HepG2 (cell line): ENCODE measurements at regions of chr7 and their contacts with region 1.

Region 1: DNA sequence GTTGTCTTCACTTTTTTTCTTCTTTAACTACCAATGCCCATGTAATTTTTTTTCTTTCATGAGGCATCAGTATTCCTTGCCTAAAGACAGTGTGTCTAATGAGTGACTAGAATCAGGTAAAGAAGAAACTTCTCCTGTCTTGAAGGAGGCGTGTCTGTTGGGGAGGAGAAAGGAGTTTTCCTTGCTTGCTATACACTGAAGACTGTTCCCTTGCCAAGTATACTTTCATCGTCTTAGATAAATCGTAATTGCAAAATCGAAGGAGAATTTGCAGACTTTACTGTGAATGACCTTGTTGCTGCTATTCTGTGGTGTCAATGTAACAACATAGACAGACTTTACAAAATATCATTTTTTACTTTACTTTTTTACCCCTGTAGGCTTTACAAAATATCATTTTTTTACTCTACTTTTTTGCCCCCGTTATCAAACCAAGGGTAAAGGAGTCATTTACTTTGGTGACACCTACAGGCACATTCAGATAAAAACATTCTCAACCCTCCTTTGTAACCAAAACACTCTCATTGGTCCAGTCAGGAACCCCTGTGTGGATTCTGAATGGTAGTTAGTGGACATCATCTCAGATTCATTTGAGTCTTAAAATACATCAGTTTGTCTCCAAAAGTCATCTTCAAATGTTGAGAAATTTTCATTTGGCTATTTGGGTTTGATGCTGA is 232.4 kb downstream of the AHR start:
- DNase-seq: peak; percentile 21
- ATAC-seq: peak; percentile 80
- H3K4me3 ChIP-seq: no peak overlapping the region
- H3K27ac ChIP-seq: no peak overlapping the region
- H3K4me1 ChIP-seq: peaks cover 8% of the 10 kb centered on the region; the same call in 1 of the 2 replicates
- H3K27me3 ChIP-seq: no peaks in the 10 kb centered on the region; a peak in 1 of 5 replicates
- CTCF ChIP-seq: peak; percentile 68
- EP300 ChIP-seq: no peak
- POLR2A ChIP-seq: no peak
- RAD21 ChIP-seq: peak; percentile 57; the same call in 1 of the 2 replicates

Region 2: GRCh38 chr7:16891338-16891737 is 639.5 kb before region 1 on chr7:
- CTCF ChIA-PET with region 1: no interaction called
- POLR2A ChIA-PET with region 1: no interaction called
- in situ Hi-C with region 1: no loop called
- intact Hi-C with region 1: loop called (anchors 1 kb)
- DNase-seq: peak; percentile 63
- ATAC-seq: peak; percentile 94
- H3K4me3 ChIP-seq: no peak overlapping the region
- H3K27ac ChIP-seq: no peak overlapping the region
- H3K4me1 ChIP-seq: no peaks in the 10 kb centered on the region
- H3K27me3 ChIP-seq: no peaks in the 10 kb centered on the region
- CTCF ChIP-seq: peak; percentile 84
- EP300 ChIP-seq: no peak
- POLR2A ChIP-seq: no peak
- RAD21 ChIP-seq: peak; percentile 80

Region 3: GRCh38 chr7:16926283-16926682 is 604.6 kb before region 1 on chr7:
- CTCF ChIA-PET with region 1: no interaction called
- POLR2A ChIA-PET with region 1: no interaction called
- in situ Hi-C with region 1: loop called (anchors 25 kb)
- intact Hi-C with region 1: loop called (anchors 5 kb)
- DNase-seq: peak; percentile 28
- ATAC-seq: peak; percentile 86
- H3K4me3 ChIP-seq: no peak overlapping the region
- H3K27ac ChIP-seq: no peak overlapping the region
- H3K4me1 ChIP-seq: peaks cover 28% of the 10 kb centered on the region
- H3K27me3 ChIP-seq: no peaks in the 10 kb centered on the region; a peak in 1 of 5 replicates
- CTCF ChIP-seq: peak; percentile 57
- EP300 ChIP-seq: no peak
- POLR2A ChIP-seq: no peak
- RAD21 ChIP-seq: peak; percentile 35; the same call in 1 of the 2 replicates

Region 4: DNA sequence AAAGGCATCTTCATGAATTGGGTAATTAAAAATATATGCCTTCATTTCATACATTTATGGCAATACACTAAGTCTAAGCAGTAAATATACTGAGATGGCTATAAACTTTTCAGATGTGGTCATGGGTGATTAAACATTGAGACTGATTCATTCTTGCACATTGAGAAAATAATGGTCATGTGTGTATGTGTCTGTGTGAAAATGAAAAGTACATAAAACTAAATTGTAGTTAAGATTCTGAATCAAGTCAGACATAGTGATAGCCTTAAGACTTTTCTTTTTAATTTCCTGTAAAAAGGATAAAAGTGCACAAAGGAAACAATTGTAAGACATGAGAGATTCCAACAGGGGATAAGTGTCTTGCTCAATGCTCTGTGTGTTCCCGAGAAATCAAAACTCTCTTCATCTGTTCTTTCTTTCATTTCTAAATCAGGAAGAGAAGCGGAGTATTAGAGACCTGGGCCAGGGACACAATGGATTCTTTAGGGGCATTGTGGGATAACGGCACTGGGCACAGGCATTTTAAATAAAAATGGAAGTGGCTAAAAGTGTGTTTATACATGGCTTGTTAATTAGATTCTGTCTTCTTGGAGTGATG is 579.3 kb before region 1 on chr7:
- CTCF ChIA-PET with region 1: no interaction called
- POLR2A ChIA-PET with region 1: no interaction called
- in situ Hi-C with region 1: loop called (anchors 25 kb)
- intact Hi-C with region 1: loop called (anchors 10 kb)
- DNase-seq: no peak
- ATAC-seq: no peak
- H3K4me3 ChIP-seq: no peak overlapping the region
- H3K27ac ChIP-seq: no peak overlapping the region
- H3K4me1 ChIP-seq: peaks cover 11% of the 10 kb centered on the region
- H3K27me3 ChIP-seq: no peaks in the 10 kb centered on the region
- CTCF ChIP-seq: no peak
- EP300 ChIP-seq: no peak
- POLR2A ChIP-seq: no peak
- RAD21 ChIP-seq: no peak

Region 5: DNA sequence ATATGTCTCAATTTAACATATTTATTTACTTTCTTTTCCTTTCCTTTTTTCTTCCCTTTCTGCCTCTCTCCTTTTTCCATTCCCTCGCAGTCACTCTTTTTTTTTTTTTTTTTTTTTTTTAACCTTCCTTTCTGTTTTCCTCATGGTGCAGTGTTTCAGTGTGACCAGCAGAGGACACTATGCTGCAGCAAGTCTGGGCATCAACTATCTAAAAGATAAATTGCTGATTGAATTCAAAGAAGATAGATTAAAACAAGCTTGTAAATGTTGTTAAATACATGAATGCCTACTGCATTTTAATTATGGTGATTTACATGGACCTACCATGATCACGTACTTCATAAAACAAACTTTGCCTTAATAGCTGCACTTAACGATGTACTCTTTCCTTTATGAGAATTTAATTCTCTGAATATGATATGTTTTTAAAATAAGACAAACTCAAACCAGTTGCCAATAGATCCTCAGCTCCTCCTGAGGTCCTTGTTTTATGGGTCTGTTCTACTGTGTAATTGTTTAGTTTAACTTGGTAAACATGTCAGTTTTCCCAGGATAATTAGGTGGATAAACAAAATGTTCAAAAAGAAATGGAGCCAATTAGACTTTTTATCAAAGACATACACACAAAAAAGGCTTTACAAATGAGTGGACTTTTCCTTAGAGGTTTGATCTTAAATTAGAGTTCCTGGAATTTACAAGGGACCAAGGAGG is 548.1 kb before region 1 on chr7:
- CTCF ChIA-PET with region 1: no interaction called
- POLR2A ChIA-PET with region 1: no interaction called
- in situ Hi-C with region 1: no loop called
- intact Hi-C with region 1: loop called (anchors 5 kb)
- DNase-seq: peak; percentile 58
- ATAC-seq: no peak
- H3K4me3 ChIP-seq: no peak overlapping the region
- H3K27ac ChIP-seq: no peak overlapping the region
- H3K4me1 ChIP-seq: peaks cover 54% of the 10 kb centered on the region
- H3K27me3 ChIP-seq: no peaks in the 10 kb centered on the region
- CTCF ChIP-seq: peak; percentile 78
- EP300 ChIP-seq: no peak
- POLR2A ChIP-seq: no peak
- RAD21 ChIP-seq: peak; percentile 75

Region 6: GRCh38 chr7:17474724-17475344 is 56.0 kb before region 1 on chr7:
- CTCF ChIA-PET with region 1: no interaction called
- POLR2A ChIA-PET with region 1: no interaction called
- in situ Hi-C with region 1: no loop called
- intact Hi-C with region 1: loop called (anchors 1 kb)
- DNase-seq: peak; percentile 17
- ATAC-seq: peak; percentile 99
- H3K4me3 ChIP-seq: no peak overlapping the region
- H3K27ac ChIP-seq: no peak overlapping the region
- H3K4me1 ChIP-seq: peaks cover 6% of the 10 kb centered on the region; the same call in 1 of the 2 replicates
- H3K27me3 ChIP-seq: no peaks in the 10 kb centered on the region
- CTCF ChIP-seq: peak; percentile 67
- EP300 ChIP-seq: no peak
- POLR2A ChIP-seq: no peak
- RAD21 ChIP-seq: peak; percentile 47; the same call in 1 of the 2 replicates